ENCODE measurements at regions of chr7 and their contacts with region 1.

Region 1: DNA sequence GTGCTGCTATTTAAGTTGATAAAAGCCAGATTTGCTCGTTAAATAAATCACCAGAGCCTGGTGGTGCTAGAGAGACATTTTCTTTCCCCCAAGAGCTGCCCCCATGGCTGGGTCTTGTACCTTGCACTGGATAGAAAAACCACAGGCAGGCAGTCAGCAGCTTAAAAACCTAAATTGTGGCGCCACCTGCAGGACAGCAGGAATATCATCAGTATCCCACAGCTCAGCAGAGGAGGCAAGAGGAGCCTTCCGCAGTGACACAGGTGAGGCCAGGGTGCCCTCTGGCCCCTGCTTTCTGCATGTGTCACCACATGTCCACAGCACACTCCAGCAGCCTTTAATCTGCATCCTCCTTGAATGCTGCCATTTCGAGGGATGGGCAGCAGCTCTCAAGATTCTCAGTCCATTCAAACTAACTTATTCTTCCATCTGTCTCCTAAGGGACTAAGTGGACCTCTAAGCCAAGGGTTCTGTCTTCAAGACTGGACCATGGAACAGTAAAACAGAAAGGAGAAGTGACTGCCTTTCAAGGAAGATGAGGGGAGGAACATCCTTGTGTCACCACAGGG is 4.5 kb upstream of the PLXNA4 start:
- DNase-seq: peak; percentile 61 to 66 (median 63)
- H3K4me3 ChIP-seq: no peak overlapping the region
- H3K4me3 Mint-ChIP-seq: no peak overlapping the region
- H3K27ac ChIP-seq: no peak overlapping the region
- H3K27ac Mint-ChIP-seq: no peak overlapping the region
- H3K4me1 ChIP-seq: peaks cover 6% of the 10 kb centered on the region
- H3K4me1 Mint-ChIP-seq: peaks cover 0 to 10% (median 5%) of the 10 kb centered on the region in 4 donors
- H3K27me3 ChIP-seq: peaks cover 21% of the 10 kb centered on the region
- H3K27me3 Mint-ChIP-seq: peaks cover 20 to 35% of the 10 kb centered on the region in 2 donors

Region 2: DNA sequence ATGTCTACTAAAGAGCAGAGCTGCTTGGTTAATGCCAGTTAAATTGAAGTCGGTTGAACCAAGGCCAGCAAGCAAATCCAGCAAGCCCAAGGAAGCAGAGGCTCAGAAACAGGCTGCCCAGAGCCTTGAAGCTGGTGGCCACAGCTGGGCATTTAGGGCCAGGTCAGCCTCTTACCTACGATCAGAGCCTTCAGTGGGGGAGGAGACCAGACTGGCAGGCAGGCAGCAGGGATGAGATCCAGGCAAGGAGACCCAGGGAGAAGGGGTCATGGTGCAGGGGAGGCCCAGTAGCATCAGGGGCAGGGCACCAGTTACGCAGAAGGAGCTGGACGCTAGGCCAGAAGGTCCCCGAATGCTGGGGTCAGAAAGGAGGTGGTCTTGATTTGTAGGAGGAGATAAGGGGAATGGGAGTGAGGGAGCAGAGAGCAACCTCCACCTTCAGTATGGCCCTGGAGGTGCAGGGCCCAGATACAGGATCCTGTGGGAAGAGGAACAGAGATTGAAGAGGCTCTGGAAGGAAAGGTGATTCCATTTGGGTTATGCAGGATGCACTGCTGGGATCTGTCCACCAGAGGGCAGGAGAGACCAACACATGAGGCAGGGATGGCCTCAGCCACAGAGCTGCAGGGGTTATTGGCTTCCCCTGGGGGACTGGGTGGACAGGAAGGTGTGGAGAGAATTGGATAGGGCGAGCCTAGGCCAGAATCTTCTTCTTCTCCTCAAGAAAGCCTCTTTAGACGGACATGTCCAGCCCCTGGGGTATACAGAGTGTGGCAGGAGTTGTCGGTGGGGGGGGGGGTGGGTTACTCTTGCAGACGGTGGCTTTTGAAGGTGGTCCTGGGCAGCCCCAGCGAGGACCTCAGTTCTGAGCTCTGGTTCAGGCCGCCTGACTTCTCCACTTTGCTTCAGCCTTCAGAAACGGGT is 891.8 kb before region 1 on chr7:
- CTCF ChIA-PET with region 1: interaction called, 3 read pairs
- POLR2A ChIA-PET with region 1: no interaction called
- intact Hi-C with region 1: loop called (anchors 5 kb)
- DNase-seq: peak in 4 of 5 donors; percentile 32 to 37 (median 34)
- H3K4me3 ChIP-seq: no peak overlapping the region
- H3K4me3 Mint-ChIP-seq: no peak overlapping the region
- H3K27ac ChIP-seq: no peak overlapping the region
- H3K27ac Mint-ChIP-seq: no peak overlapping the region
- H3K4me1 ChIP-seq: no peaks in the 10 kb centered on the region
- H3K4me1 Mint-ChIP-seq: peaks cover 0 to 9% (median 2%) of the 10 kb centered on the region in 4 donors
- H3K27me3 ChIP-seq: no peaks in the 10 kb centered on the region
- H3K27me3 Mint-ChIP-seq: peaks cover 26 to 47% of the 10 kb centered on the region in 2 donors

Region 3: GRCh38 chr7:132276976-132277725 is 303.6 kb before region 1 on chr7:
- CTCF ChIA-PET with region 1: no interaction called
- POLR2A ChIA-PET with region 1: no interaction called
- intact Hi-C with region 1: no loop called
- DNase-seq: no peak
- H3K4me3 ChIP-seq: no peak overlapping the region
- H3K4me3 Mint-ChIP-seq: no peak overlapping the region
- H3K27ac ChIP-seq: no peak overlapping the region
- H3K27ac Mint-ChIP-seq: no peak overlapping the region
- H3K4me1 ChIP-seq: no peaks in the 10 kb centered on the region
- H3K4me1 Mint-ChIP-seq: no peaks in the 10 kb centered on the region
- H3K27me3 ChIP-seq: no peaks in the 10 kb centered on the region
- H3K27me3 Mint-ChIP-seq: peaks cover 0 to 11% of the 10 kb centered on the region in 2 donors

Region 4: GRCh38 chr7:132318352-132319318 is 262.2 kb before region 1 on chr7:
- CTCF ChIA-PET with region 1: interaction called, 25 read pairs
- POLR2A ChIA-PET with region 1: no interaction called
- intact Hi-C with region 1: loop called (anchors 1 kb)
- DNase-seq: peak; percentile 70 to 74 (median 72)
- H3K4me3 ChIP-seq: no peak overlapping the region
- H3K4me3 Mint-ChIP-seq: peak overlapping the region in 6 of 8 donors; percentile 4 to 51 (median 22)
- H3K27ac ChIP-seq: no peak overlapping the region
- H3K27ac Mint-ChIP-seq: no peak overlapping the region
- H3K4me1 ChIP-seq: peaks cover 10% of the 10 kb centered on the region
- H3K4me1 Mint-ChIP-seq: peaks cover 6 to 13% (median 9%) of the 10 kb centered on the region in 4 donors
- H3K27me3 ChIP-seq: no peaks in the 10 kb centered on the region
- H3K27me3 Mint-ChIP-seq: peaks cover 25 to 30% of the 10 kb centered on the region in 2 donors

Region 5: DNA sequence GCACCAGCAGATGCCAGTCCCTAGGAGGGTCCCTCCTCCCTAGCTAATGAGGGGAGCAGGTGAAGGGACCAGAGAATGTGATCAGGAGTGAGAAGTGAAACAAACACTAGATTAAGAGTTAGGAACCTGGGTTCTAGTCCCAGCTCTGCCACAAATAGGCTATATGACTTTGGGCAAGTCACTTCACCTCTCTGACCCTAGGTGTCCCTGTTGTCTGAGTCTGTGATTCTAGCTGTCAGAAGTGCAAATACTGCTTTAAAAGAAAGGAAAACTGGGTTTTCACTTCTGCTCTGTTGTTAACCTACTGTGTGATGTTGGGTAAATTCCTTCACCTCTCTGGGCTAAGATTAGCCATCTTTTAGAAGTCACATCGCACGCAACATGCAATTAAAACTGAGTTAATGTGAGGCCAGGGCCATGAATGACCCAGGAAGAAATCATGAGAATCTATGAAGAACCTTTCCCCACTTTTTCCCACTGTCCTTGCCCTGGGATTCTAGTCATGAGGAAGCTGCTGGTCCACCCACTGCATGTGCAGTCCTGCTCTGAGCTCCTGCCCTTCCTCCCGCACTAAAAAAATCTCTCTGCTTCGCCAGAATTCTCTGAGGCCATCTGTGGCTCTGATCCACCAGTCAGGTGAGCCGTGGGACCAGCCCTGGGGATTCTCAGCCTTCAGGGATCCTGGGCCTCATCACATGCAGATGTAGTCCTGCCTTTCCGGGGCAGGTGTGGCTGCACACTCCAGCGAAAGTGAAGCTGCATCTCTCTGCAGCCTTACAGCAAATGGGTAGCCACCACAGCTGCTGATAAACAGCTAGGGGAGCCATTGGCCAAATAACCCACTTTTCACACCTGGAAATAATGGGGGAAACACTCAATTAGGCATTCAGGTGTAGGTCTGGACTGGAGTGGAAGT is 186.3 kb before region 1 on chr7:
- CTCF ChIA-PET with region 1: interaction called, 140 read pairs
- POLR2A ChIA-PET with region 1: interaction called, 6 read pairs
- intact Hi-C with region 1: no loop called
- DNase-seq: peak; percentile 31 to 47 (median 38)
- H3K4me3 ChIP-seq: no peak overlapping the region
- H3K4me3 Mint-ChIP-seq: no peak overlapping the region
- H3K27ac ChIP-seq: no peak overlapping the region
- H3K27ac Mint-ChIP-seq: no peak overlapping the region
- H3K4me1 ChIP-seq: peaks cover 3% of the 10 kb centered on the region
- H3K4me1 Mint-ChIP-seq: peaks cover 2 to 12% (median 5%) of the 10 kb centered on the region in 4 donors
- H3K27me3 ChIP-seq: no peaks in the 10 kb centered on the region
- H3K27me3 Mint-ChIP-seq: peaks cover 2 to 8% of the 10 kb centered on the region in 2 donors

Region 6: DNA sequence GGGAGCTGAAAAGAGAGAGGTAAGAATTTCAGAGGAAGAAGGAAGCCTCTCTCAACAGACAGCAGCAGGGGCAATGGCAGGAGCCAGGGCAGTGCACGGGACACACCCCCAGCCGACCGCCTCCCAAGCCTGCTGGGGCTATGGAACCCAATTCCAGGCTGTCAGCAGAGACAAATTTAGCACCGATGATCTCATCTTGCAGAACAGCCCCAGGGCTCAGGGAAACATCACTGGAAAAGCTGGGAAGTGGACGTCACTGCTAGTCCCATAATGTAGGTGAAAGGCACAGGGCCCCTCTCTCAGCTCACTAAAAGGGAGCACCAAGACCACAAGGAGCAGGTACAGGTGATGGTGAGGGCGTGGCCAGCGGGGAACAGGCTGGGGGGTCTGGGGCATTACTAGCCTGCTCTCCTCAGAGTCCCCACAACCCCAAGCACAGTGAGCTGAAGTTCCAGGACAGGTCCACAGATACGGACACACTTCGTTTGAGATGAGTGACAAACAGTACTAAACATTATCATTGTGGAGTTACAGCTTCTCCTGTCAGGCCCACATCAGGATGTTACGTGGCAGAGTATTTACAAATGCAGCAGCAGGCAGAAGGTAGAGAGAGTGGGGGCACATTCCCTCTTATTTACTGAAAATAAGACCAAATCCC is 108.2 kb before region 1 on chr7:
- CTCF ChIA-PET with region 1: no interaction called
- POLR2A ChIA-PET with region 1: no interaction called
- intact Hi-C with region 1: loop called (anchors 10 kb)
- DNase-seq: no peak
- H3K4me3 ChIP-seq: no peak overlapping the region
- H3K4me3 Mint-ChIP-seq: peak overlapping the region in 1 of 8 donors; percentile 53
- H3K27ac ChIP-seq: no peak overlapping the region
- H3K27ac Mint-ChIP-seq: no peak overlapping the region
- H3K4me1 ChIP-seq: peaks cover 13% of the 10 kb centered on the region
- H3K4me1 Mint-ChIP-seq: peaks cover 8 to 19% (median 14%) of the 10 kb centered on the region in 4 donors
- H3K27me3 ChIP-seq: no peaks in the 10 kb centered on the region
- H3K27me3 Mint-ChIP-seq: peaks cover 2 to 3% of the 10 kb centered on the region in 2 donors

Region 7: DNA sequence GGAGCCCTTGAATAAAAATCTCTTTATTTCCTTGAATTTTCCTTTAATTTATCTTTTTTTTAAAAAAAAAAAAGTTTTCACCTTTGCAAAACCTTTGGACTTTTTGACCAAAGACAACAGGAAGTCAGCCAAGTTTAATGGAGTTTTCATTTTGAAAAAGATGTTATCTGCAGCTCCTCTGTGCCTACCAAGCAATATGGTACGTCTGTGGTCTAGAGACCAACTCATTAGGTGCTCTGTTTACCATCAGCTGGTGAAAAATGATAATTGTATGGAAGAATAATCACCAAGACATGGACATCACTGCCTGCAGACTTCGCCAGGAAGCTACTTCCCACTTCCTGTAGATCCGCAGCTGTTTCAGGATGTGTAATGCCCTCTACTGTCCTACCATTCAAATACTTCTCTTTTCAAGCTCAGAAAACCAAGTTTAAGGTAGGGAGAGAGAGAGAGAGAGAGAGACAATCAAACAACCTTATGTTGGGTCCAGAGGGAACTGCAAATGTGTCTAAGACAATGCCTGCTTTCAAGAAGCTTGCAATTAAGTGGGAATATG is 23.2 kb before region 1 on chr7:
- CTCF ChIA-PET with region 1: interaction called, 17 read pairs
- POLR2A ChIA-PET with region 1: no interaction called
- intact Hi-C with region 1: no loop called
- DNase-seq: no peak
- H3K4me3 ChIP-seq: no peak overlapping the region
- H3K4me3 Mint-ChIP-seq: peak overlapping the region in 1 of 8 donors; percentile 37
- H3K27ac ChIP-seq: no peak overlapping the region
- H3K27ac Mint-ChIP-seq: no peak overlapping the region
- H3K4me1 ChIP-seq: no peaks in the 10 kb centered on the region
- H3K4me1 Mint-ChIP-seq: peaks cover 0 to 3% (median under 1%) of the 10 kb centered on the region in 4 donors
- H3K27me3 ChIP-seq: no peaks in the 10 kb centered on the region
- H3K27me3 Mint-ChIP-seq: peaks cover 0 to 1% of the 10 kb centered on the region in 2 donors

Region 8: GRCh38 chr7:132569884-132570614 is 10.8 kb before region 1 on chr7:
- CTCF ChIA-PET with region 1: interaction called, 10 read pairs
- POLR2A ChIA-PET with region 1: no interaction called
- intact Hi-C with region 1: no loop called
- DNase-seq: no peak
- H3K4me3 ChIP-seq: no peak overlapping the region
- H3K4me3 Mint-ChIP-seq: no peak overlapping the region
- H3K27ac ChIP-seq: no peak overlapping the region
- H3K27ac Mint-ChIP-seq: no peak overlapping the region
- H3K4me1 ChIP-seq: no peaks in the 10 kb centered on the region
- H3K4me1 Mint-ChIP-seq: peaks cover 3 to 16% (median 7%) of the 10 kb centered on the region in 4 donors
- H3K27me3 ChIP-seq: peaks cover 28% of the 10 kb centered on the region
- H3K27me3 Mint-ChIP-seq: peaks cover 43 to 71% of the 10 kb centered on the region in 2 donors

Measured in CD4-positive, alpha-beta memory T cell (primary cell).